H1 (cell line): ENCODE measurements at regions of chr2 and their contacts with region 1.

Region 1: DNA sequence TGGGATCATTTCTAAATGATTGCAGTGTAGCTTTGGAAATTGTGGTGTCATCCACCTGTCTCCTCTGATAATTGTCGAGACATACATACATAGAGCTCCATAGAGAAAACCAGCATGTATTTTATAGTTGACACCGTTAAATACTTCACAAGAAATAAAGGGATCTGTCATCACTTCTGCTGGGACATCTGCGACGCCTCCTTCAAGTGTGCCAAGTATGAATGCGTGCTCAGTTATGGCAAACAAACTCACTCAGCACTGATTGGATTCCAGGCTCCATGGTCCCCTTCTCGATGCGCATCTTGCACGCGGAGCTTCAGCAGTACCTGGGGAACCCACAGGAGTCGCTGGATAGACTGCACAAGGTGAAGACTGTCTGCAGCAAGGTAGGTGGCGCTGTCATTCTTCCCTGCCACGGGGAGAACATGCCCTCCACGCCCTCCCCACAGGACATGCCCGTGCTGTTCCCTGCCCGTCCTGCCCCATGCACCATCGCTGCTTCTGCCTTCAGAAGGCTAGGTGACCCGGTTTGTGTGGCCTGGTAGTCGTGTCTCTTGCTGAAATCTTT is 64.1 kb downstream of the TRAPPC12 start:
- DNase-seq: peak in 1 of 2 experiments; percentile 50
- H3K4me3 ChIP-seq: no peak overlapping the region
- H3K27ac ChIP-seq: no peak overlapping the region
- H3K4me1 ChIP-seq: peaks cover 0 to 3% (median 0%) of the 10 kb centered on the region in 4 experiments; a peak in 1 of 7 replicates
- H3K27me3 ChIP-seq: no peaks in the 10 kb centered on the region
- CTCF ChIP-seq: peak; percentile 79 to 98 (median 88)
- EP300 ChIP-seq: no peak
- POLR2A ChIP-seq: no peak
- RAD21 ChIP-seq: peak; percentile 49 to 61

Region 2: GRCh38 chr2:3403587-3404334 is 39.8 kb before region 1 on chr2:
- CTCF ChIA-PET with region 1: no interaction called
- POLR2A ChIA-PET with region 1: no interaction called
- DNase-seq: no peak
- H3K4me3 ChIP-seq: no peak overlapping the region
- H3K27ac ChIP-seq: no peak overlapping the region
- H3K4me1 ChIP-seq: peaks cover 0 to 11% (median 5%) of the 10 kb centered on the region in 4 experiments; a peak in 6 of 7 replicates
- H3K27me3 ChIP-seq: no peaks in the 10 kb centered on the region
- CTCF ChIP-seq: no peak
- EP300 ChIP-seq: no peak
- POLR2A ChIP-seq: no peak
- RAD21 ChIP-seq: no peak

Region 3: GRCh38 chr2:3430172-3430571 is 13.4 kb before region 1 on chr2:
- CTCF ChIA-PET with region 1: interaction called, 26 read pairs
- POLR2A ChIA-PET with region 1: no interaction called
- DNase-seq: no peak
- H3K4me3 ChIP-seq: no peak overlapping the region
- H3K27ac ChIP-seq: no peak overlapping the region
- H3K4me1 ChIP-seq: peaks cover 0 to 4% (median under 1%) of the 10 kb centered on the region in 4 experiments; a peak in 2 of 7 replicates
- H3K27me3 ChIP-seq: no peaks in the 10 kb centered on the region
- CTCF ChIP-seq: no peak
- EP300 ChIP-seq: no peak
- POLR2A ChIP-seq: no peak
- RAD21 ChIP-seq: no peak